Panc1 (cell line): ENCODE measurements at regions of chr22 and their contacts with region 1.

Region 1: GRCh38 chr22:32805361-32805881 is 3.9 kb downstream of the TIMP3 start:
- DNase-seq: no peak
- ATAC-seq: no peak
- H3K4me3 ChIP-seq: no peak overlapping the region
- H3K27ac ChIP-seq: no peak overlapping the region
- H3K4me1 ChIP-seq: no peaks in the 10 kb centered on the region
- H3K27me3 ChIP-seq: peaks cover 2% of the 10 kb centered on the region; the same call in 1 of the 2 replicates
- CTCF ChIP-seq: no peak

Region 2: DNA sequence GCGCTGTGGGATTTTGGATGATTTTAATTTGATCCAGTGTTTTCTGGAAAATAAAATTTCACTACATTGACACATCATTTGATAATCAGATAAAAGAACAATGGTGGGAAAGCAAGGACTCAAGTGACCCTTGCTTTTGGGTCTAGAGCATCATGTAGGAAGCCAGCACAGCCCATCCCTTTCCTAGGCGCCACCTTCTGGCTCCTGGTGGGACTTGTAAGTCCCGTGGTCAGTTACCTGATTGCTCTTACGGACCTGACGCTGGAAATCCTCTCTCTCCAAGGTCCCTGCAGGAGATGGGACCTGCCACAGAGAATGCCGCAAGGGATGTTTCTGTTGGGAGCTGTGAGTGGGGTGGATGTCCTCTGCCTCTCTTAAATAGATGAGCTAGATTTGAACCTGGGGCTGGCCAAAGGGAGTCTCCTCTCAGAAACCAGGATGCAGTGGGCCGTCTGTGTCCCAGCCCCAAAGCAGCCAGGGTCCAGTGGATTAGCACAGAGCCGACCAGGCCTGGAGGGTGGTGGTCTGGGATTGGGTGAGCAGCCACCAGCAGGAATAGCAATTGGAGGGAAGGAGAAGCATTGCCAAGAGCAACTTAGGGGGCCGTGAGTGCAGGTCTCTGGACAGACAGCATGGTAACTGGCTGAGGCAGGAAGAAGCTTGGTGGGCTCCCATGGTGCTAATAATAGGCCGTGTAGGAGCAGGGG is 17.8 kb after region 1 on chr22:
- CTCF ChIA-PET with region 1: interaction called, 16 read pairs
- POLR2A ChIA-PET with region 1: no interaction called
- in situ Hi-C with region 1: no loop called
- intact Hi-C with region 1: no loop called
- DNase-seq: no peak
- ATAC-seq: 0 out of 2 replicates have a peak, but pooled peaks have one; percentile 70
- H3K4me3 ChIP-seq: no peak overlapping the region
- H3K27ac ChIP-seq: no peak overlapping the region
- H3K4me1 ChIP-seq: no peaks in the 10 kb centered on the region
- H3K27me3 ChIP-seq: no peaks in the 10 kb centered on the region
- CTCF ChIP-seq: peak; percentile 71